ENCODE measurements at regions of chr19 and their contacts with region 1.

Region 1: DNA sequence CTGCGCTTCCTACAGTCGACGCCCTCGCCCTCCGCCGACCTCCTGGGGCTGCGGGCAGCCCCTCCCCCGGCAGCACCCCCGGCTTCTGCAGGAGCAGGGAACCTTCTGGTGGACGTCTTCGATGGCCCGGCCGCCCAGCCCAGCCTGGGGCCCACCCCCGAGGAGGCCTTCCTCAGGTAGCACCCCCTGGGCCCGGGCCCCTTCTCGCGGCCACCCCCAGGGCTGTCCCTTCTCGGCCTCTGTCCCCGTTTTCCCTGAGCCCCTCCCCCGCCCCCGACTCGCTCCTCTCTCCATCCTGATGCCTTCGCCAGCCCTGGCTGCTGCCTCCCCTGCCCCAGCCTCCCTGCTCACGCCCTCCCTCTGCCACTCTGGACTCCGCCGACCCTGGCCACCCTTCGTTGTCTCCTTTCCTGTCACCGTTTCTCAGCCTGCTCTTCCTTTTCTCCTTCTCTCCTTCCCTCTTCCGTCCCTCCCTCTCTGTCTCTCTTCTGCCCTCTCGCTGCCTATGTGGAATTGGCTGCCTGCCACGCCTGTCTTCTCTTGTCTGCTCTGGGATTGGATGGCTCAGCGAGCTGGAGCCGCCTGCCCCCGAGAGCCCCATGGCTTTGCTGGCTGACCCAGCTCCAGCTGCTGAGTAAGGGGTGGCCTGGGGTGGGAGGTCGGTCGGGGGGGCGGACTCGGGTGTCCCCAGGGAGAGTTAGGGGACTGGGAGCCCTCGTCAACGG is 11.0 kb downstream of the FUZ start:
- DNase-seq: peak; percentile 38 to 62
- H3K4me3 ChIP-seq: no peak overlapping the region
- H3K4me3 Mint-ChIP-seq: no peak overlapping the region
- H3K27ac Mint-ChIP-seq: no peak overlapping the region
- H3K4me1 ChIP-seq: no peaks in the 10 kb centered on the region
- H3K4me1 Mint-ChIP-seq: no peaks in the 10 kb centered on the region
- H3K27me3 ChIP-seq: no peaks in the 10 kb centered on the region
- H3K27me3 Mint-ChIP-seq: no peaks in the 10 kb centered on the region
- CTCF ChIP-seq: no peak

Region 2: DNA sequence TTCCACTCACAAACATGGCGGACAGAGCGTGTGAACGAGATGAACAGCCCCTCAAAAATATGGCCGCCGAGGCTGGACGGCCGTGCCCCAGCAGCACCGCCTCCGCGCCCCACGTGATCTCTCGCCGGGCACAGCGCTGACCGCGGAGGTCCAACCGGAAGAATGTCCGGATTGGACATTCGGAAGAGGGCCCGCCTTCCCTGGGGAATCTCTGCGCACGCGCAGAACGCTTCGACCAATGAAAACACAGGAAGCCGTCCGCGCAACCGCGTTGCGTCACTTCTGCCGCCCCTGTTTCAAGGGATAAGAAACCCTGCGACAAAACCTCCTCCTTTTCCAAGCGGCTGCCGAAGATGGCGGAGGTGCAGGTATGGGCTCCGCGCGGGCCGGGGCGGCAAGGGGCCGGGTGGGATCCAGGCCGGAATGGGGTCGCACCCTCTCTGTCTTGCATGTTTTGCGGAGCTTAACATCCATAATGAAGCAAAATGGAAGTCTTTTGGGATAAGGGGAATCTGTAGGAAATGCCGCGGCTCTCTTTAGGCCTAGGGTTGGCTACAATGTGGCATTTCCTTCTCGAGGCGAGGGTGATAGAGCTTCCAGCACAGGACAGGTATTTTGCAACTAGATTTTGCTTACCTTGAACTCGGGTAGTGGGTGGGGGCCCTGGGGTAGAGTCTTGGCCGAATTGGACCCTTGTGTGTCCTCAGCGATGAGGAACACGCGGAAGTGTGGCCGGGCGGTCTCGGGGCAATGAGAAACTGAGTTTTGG is 314.7 kb before region 1 on chr19 and contains the start of gene RPL13A:
- CTCF ChIA-PET with region 1: no interaction called
- POLR2A ChIA-PET with region 1: interaction called, 12 read pairs
- intact Hi-C with region 1: no loop called
- DNase-seq: peak; percentile 99 to 100
- H3K4me3 ChIP-seq: peak within 1 kb of the TSS; percentile 88
- H3K4me3 Mint-ChIP-seq: peak within 1 kb of the TSS; percentile 97
- H3K27ac Mint-ChIP-seq: peak within 1 kb of the TSS; percentile 99
- H3K4me1 ChIP-seq: peaks cover 13% of the 10 kb centered on the region; the same call in 1 of the 2 replicates
- H3K4me1 Mint-ChIP-seq: no peaks in the 10 kb centered on the region
- H3K27me3 ChIP-seq: no peaks in the 10 kb centered on the region
- H3K27me3 Mint-ChIP-seq: no peaks in the 10 kb centered on the region
- CTCF ChIP-seq: no peak
- total RNA-seq, gene RPL13A: 2,726 and 2,880 TPM in 2 replicates